Heart right ventricle (tissue), 16 donors: ENCODE measurements at regions of chr14 and their contacts with region 1.

Region 1: DNA sequence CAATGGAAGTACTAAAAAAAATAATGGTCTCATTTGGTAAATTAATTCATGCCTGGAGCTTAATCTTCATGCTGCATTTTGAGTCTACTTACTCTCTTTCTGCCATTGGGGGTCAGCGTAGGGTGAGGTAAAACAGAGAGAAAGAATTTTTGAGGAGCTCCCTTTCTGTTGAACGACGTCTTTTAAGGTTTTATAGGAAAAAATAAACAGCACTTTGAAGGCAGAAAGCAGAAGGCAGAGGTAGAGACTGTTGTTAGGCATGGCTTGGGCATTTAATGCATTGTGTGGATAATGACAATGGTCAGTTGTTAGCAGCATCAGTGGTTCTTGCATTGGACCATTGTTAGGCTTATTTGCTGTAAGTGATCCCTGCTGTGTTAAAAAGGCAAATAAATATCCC is 557.2 kb upstream of the STXBP6 start:
- DNase-seq: no peak
- ATAC-seq: no peak
- H3K4me3 ChIP-seq: no peak overlapping the region
- H3K27ac ChIP-seq: no peak overlapping the region
- H3K4me1 ChIP-seq: no peaks in the 10 kb centered on the region
- H3K27me3 ChIP-seq: no peaks in the 10 kb centered on the region
- CTCF ChIP-seq: no peak

Region 2: DNA sequence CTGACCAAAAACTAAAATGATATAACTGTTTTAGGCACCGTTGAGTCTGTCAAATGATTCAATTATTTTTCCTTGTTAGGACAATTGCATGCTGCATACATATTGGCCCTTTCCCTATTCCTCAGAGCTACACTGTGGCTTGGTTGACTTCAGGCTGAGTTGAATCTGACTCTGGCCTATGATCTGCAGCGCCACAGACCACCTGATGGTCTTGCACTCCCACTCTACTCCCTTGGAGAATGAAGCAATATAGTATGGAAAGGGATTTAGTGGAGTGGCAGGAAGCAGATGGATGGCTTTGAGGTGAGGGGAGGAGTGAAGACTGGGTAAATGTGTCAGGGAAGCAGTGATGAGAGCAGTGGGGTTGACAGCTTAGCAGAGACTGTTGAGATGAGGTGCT is 21.8 kb after region 1 on chr14:
- intact Hi-C with region 1: loop called in 1 of 10 experiments (anchors 2 kb)
- DNase-seq: no peak
- ATAC-seq: no peak
- H3K4me3 ChIP-seq: no peak overlapping the region
- H3K27ac ChIP-seq: no peak overlapping the region
- H3K4me1 ChIP-seq: no peaks in the 10 kb centered on the region
- H3K27me3 ChIP-seq: no peaks in the 10 kb centered on the region
- CTCF ChIP-seq: no peak